Transverse colon (tissue), 4 donors: ENCODE measurements at regions of chr9 and their contacts with region 1.

Region 1: DNA sequence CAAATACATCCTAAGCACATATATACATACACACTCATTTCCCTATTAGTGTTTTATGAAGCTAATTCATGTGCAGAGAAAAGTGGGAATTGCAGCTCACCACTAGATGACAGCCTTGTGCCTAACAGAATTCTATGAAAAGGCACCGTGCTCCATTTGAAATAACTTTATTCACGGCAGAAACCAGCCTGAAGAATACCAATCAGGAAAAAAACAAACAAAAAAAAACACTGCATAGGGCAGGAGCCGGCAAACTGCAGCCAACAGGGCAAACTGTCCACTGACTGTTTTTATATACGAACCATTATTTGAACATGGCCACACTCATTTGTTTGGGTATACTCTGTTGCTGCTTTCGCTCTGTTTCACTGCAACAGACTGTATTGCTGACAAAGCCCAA is 33.6 kb downstream of the ERMP1 start:
- DNase-seq: no peak
- H3K4me3 ChIP-seq: peak overlapping the region in 1 of 4 donors; percentile 16
- H3K27ac ChIP-seq: no peak overlapping the region
- H3K4me1 ChIP-seq: peaks cover 0 to 22% (median 17%) of the 10 kb centered on the region in 4 donors
- H3K27me3 ChIP-seq: no peaks in the 10 kb centered on the region
- CTCF ChIP-seq: peak; percentile 46 to 58 (median 52)
- EP300 ChIP-seq: no peak
- POLR2A ChIP-seq: no peak

Region 2: DNA sequence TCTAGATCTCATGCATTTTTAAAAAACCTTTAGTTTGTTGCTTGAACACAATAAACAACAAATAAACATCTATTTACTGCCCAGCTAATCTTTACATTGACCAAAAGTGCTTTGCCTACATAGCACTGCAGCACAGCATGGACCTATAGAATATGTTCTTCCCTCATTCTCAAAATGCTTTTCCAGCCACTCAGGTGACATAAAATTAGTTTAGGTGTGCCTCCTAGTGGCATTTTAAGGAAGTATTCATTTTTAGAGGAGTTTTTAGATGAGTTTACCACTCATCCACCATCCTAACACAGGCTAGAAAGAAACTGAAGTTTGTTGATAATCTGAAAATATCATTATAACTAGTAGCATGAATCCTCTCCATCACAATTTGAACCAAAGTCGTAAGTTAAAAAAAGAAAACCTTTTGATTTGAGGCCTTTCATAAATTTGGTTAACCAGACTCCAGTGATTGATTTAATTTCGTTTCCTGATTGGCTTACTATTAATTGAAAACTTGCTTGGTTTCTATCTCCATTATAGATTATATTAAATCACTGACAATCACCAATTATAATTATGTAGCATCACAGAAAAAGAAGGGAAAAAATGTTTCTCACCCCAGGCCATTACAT is 374.2 kb before region 1 on chr9:
- in situ Hi-C with region 1: no loop called
- intact Hi-C with region 1: loop called (anchors 5 kb)
- DNase-seq: no peak
- H3K4me3 ChIP-seq: no peak overlapping the region
- H3K27ac ChIP-seq: no peak overlapping the region
- H3K4me1 ChIP-seq: peaks cover 0 to 3% (median 0%) of the 10 kb centered on the region in 4 donors
- H3K27me3 ChIP-seq: no peaks in the 10 kb centered on the region
- CTCF ChIP-seq: peak; percentile 30 to 53 (median 40)
- EP300 ChIP-seq: no peak
- POLR2A ChIP-seq: no peak

Region 3: GRCh38 chr9:5786370-5787127 is 12.8 kb before region 1 on chr9:
- in situ Hi-C with region 1: no loop called
- intact Hi-C with region 1: no loop called
- DNase-seq: no peak
- H3K4me3 ChIP-seq: no peak overlapping the region
- H3K27ac ChIP-seq: no peak overlapping the region
- H3K4me1 ChIP-seq: peaks cover 0 to 3% (median 0%) of the 10 kb centered on the region in 4 donors
- H3K27me3 ChIP-seq: no peaks in the 10 kb centered on the region
- CTCF ChIP-seq: no peak
- EP300 ChIP-seq: no peak
- POLR2A ChIP-seq: no peak